ENCODE measurements at regions of chr2 and their contacts with region 1.

Region 1: GRCh38 chr2:200888704-200889625 is at the starts of genes NIF3L1 and PPIL3:
- DNase-seq: peak; percentile 88 to 99 (median 95)

Region 2: GRCh38 chr2:200864176-200864976 is 24.6 kb before region 1 on chr2 and contains the start of gene CLK1:
- intact Hi-C with region 1: loop called (anchors 2 kb)
- DNase-seq: peak; percentile 92 to 99 (median 94)

Region 3: GRCh38 chr2:200963124-200963917 is 74.4 kb after region 1 on chr2 and contains the start of gene ORC2:
- intact Hi-C with region 1: no loop called
- DNase-seq: peak; percentile 88 to 99 (median 92)

Region 4: GRCh38 chr2:201074996-201075395 is 186.0 kb after region 1 on chr2:
- intact Hi-C with region 1: no loop called
- DNase-seq: no peak